Gastrocnemius medialis (tissue), 4 donors: ENCODE measurements at regions of chr13 and their contacts with region 1.

Region 1: DNA sequence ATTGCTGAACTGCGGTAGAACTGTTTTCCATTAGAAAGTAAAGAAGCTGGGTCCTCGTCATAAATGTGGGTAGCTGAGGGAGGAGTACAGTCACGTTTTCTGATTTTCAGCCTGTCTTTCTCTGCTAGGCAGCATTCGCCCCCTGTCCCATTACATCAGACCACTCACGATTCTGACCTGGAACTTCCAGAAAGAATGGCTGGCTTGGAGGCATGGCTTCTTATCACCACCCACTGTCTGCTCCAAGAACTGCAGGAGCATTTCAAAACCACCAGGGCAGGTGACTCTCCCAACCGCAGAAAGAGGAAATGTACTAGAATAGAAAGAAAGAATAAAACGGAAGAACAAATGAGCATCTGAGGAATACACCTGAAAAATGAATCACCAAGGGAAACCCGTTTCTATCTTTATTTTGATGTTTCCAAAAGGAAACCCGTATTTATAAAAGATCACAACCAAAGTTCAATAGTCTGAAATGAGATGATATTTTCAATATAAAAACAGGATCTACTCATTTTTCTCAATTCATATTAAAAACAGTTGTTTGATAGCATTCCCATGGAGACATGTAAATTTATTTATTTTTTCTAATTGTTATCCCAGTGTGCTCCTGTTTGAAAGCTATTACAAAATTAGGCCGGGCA is 22.1 kb upstream of the POMP start:
- DNase-seq: no peak
- ATAC-seq: peak; percentile 37 to 42
- H3K4me3 ChIP-seq: no peak overlapping the region
- H3K27ac ChIP-seq: peak overlapping the region; percentile 22 to 66 (median 60)
- H3K4me1 ChIP-seq: peaks cover 0 to 16% of the 10 kb centered on the region in 2 donors
- H3K27me3 ChIP-seq: no peaks in the 10 kb centered on the region
- CTCF ChIP-seq: peak in 4 of 5 experiments; percentile 37 to 64 (median 57)
- POLR2A ChIP-seq: no peak

Region 2: DNA sequence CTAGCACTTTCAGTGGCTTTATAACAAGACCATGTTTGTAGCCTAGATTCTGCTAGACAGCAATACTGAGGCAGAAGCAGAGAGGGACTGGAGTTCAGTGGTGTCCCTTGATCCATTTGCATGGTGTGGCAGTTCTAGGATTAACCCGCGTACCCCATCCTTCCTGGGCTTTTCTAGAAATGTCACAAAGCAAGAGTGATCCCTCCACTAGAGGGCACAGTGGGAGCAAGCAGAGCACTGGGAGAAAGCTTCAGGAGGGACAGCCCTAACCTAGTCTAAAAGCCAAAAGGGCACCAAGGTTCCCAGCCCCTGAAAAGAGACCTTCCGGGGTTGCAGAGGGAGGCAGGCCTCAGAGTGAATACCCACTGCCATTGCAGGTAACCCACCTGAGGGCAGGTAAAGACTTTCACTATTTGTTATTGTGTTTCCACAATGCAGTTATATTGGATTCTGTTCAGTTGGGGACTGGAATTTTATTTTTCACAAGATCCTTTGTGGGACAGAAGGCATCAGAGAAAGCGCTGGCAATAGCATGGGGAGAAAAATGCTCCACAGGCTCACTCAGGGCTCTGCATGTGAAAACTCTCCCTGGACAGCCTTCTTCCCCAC is 312.5 kb before region 1 on chr13:
- in situ Hi-C with region 1: loop called in 3 of 4 experiments (anchors 10 to 25 kb)
- intact Hi-C with region 1: no loop called
- DNase-seq: peak in 1 of 2 donors; percentile 11
- ATAC-seq: peak; percentile 39 to 46
- H3K4me3 ChIP-seq: no peak overlapping the region
- H3K27ac ChIP-seq: peak overlapping the region; percentile 33 to 73 (median 58)
- H3K4me1 ChIP-seq: peaks cover 0 to 4% of the 10 kb centered on the region in 2 donors
- H3K27me3 ChIP-seq: no peaks in the 10 kb centered on the region
- CTCF ChIP-seq: peak; percentile 39 to 67 (median 53)
- POLR2A ChIP-seq: no peak

Region 3: DNA sequence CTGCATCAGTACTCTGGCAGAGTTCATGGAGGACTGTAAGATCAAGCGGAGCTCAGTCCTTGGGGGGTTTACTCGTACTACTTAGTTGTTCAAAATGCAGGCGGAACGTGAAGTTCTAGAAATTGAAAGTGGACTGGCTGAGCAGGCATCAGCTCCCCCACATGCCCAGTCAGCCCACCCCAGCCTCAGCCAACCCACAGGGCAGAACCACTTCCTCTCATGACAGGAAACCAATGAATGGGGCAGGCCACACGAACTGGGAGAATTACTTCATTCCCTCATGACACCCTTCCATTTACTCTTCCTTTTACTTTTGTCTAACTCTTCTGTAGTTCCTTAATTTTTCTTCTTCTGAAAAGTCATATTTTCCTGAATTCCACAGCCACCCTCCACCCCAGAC is 213.8 kb before region 1 on chr13:
- in situ Hi-C with region 1: no loop called
- intact Hi-C with region 1: no loop called
- DNase-seq: peak; percentile 32
- ATAC-seq: no peak
- H3K4me3 ChIP-seq: no peak overlapping the region
- H3K27ac ChIP-seq: no peak overlapping the region
- H3K4me1 ChIP-seq: no peaks in the 10 kb centered on the region
- H3K27me3 ChIP-seq: no peaks in the 10 kb centered on the region
- CTCF ChIP-seq: no peak
- POLR2A ChIP-seq: no peak

Region 4: DNA sequence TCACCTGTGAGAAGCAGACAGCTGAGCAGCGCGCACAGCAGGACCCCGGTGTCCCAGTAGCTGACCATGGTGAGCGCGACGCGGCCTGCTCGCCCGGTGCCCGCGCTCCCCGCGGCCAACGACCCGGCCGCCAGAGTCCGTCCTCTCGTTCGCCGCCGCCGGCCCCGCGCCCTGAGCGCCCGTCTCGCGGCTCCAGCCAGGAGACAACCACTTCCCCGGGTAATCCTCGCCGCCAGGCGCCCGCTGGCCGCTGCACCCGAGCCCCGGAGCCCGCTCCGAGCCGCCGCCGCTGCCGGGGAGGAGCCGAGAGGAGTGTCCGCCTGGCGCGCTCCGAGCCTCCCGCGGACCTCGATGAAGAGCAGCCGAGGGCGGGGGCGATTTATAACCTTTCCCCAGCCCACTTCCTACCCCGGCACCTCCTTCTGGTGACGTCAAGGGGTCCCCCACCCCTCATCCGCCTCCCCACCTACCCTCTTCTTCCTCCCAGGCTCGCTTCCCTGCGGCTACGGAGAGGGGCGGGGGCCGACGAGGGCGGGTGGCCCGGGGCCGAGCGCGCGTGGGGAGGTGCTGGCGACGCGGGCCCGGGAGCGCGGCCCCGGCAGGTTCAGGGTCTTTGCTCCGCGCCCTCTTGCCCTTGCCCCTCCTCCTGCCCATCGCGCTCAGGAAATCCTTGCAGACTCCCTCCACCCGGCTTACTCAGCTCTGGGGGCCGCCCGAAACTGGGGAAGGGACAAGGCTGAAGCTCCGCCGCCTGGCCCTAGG is 141.8 kb before region 1 on chr13 and contains the start of gene FLT1:
- in situ Hi-C with region 1: no loop called
- intact Hi-C with region 1: loop called (anchors 5 kb)
- DNase-seq: peak; percentile 18 to 31
- ATAC-seq: peak; percentile 66 to 68
- H3K4me3 ChIP-seq: peak within 1 kb of the TSS; percentile 52 to 65 (median 63)
- H3K27ac ChIP-seq: peak within 1 kb of the TSS; percentile 72 to 85 (median 82)
- H3K4me1 ChIP-seq: no peaks in the 10 kb centered on the region
- H3K27me3 ChIP-seq: peaks cover 6 to 44% (median 15%) of the 10 kb centered on the region in 3 donors
- CTCF ChIP-seq: no peak
- POLR2A ChIP-seq: peak; percentile 67 to 84
- total RNA-seq, gene FLT1: 20.7 to 42.9 (median 29.5) TPM

Region 5: GRCh38 chr13:28532388-28533124 is 104.2 kb before region 1 on chr13:
- in situ Hi-C with region 1: no loop called
- intact Hi-C with region 1: loop called (anchors 2 kb)
- DNase-seq: no peak
- ATAC-seq: peak; percentile 40 to 49
- H3K4me3 ChIP-seq: peak overlapping the region; percentile 38 to 49 (median 47)
- H3K27ac ChIP-seq: peak overlapping the region; percentile 61 to 80 (median 74)
- H3K4me1 ChIP-seq: peaks cover 0 to 6% of the 10 kb centered on the region in 2 donors
- H3K27me3 ChIP-seq: peaks cover 14 to 48% (median 16%) of the 10 kb centered on the region in 3 donors
- CTCF ChIP-seq: no peak
- POLR2A ChIP-seq: no peak

Region 6: GRCh38 chr13:28658796-28659620 is 22.2 kb after region 1 on chr13 and contains the start of gene POMP:
- in situ Hi-C with region 1: no loop called
- intact Hi-C with region 1: no loop called
- DNase-seq: peak; percentile 86 to 90
- ATAC-seq: peak; percentile 95 to 97
- H3K4me3 ChIP-seq: peak within 1 kb of the TSS; percentile 77 to 92 (median 86)
- H3K27ac ChIP-seq: peak within 1 kb of the TSS; percentile 93 to 95 (median 95)
- H3K4me1 ChIP-seq: peaks cover 39 to 42% of the 10 kb centered on the region in 2 donors
- H3K27me3 ChIP-seq: no peaks in the 10 kb centered on the region
- CTCF ChIP-seq: peak in 1 of 5 experiments; percentile 14
- POLR2A ChIP-seq: peak; percentile 97 to 99
- total RNA-seq, gene POMP: 162 to 188 (median 176) TPM

Region 7: GRCh38 chr13:28678809-28679208 is 42.0 kb after region 1 on chr13:
- in situ Hi-C with region 1: no loop called
- intact Hi-C with region 1: no loop called
- DNase-seq: no peak
- ATAC-seq: no peak
- H3K4me3 ChIP-seq: no peak overlapping the region
- H3K27ac ChIP-seq: no peak overlapping the region
- H3K4me1 ChIP-seq: no peaks in the 10 kb centered on the region
- H3K27me3 ChIP-seq: no peaks in the 10 kb centered on the region
- CTCF ChIP-seq: no peak
- POLR2A ChIP-seq: no peak